MCF 10A (cell line): ENCODE measurements at regions of chr2 and their contacts with region 1.

Region 1: DNA sequence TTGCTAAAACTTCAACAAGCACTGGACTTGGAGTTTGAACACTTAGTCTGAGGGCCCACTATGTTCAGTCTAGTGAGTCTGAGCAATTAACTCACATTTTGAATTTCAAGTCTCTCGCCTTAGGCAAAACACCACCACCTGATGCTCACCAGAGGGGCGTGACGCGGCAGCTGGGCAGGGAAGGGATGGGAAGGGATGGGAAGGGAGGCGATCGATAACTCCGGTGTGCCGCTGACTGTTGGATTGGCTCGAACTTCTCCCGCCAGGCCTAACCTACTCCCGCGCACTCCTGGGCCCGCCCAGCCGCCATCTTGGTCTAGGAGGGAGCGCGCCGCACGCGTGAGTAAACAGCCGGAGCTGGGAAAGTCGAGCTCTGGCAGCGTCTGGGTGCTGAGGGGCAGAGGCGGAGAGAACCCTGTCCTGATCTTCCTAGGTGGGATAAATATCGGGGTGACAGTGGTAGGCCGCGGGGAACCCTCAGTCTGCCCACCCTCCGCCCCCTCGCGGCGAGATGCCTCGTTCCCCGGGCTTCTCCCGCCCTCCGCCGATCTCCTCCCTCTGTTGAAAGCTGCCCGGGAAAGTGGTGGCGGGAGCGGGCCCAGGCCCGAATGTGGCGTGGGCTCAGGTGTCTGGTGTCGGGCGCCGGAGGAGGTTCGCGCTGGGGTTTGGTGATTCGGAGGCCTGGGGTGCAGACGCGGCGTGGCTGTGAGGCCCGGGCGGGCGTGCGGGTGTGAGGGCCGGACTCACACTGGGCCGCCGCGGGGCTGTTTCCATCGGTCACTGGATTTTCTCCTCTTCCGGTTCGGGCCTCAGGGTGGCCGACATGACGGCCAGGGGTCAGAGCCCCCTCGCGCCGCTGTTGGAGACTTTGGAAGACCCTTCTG is at the start of gene RIF1:
- DNase-seq: peak; percentile 95
- H3K4me3 Mint-ChIP-seq: peak within 1 kb of the TSS; percentile 86
- H3K27ac Mint-ChIP-seq: peak within 1 kb of the TSS; percentile 97
- H3K4me1 Mint-ChIP-seq: no peaks in the 10 kb centered on the region
- H3K27me3 Mint-ChIP-seq: no peaks in the 10 kb centered on the region
- CTCF ChIP-seq: peak; percentile 60
- total RNA-seq, gene RIF1: 42.5 and 47.3 TPM in 2 replicates

Region 2: DNA sequence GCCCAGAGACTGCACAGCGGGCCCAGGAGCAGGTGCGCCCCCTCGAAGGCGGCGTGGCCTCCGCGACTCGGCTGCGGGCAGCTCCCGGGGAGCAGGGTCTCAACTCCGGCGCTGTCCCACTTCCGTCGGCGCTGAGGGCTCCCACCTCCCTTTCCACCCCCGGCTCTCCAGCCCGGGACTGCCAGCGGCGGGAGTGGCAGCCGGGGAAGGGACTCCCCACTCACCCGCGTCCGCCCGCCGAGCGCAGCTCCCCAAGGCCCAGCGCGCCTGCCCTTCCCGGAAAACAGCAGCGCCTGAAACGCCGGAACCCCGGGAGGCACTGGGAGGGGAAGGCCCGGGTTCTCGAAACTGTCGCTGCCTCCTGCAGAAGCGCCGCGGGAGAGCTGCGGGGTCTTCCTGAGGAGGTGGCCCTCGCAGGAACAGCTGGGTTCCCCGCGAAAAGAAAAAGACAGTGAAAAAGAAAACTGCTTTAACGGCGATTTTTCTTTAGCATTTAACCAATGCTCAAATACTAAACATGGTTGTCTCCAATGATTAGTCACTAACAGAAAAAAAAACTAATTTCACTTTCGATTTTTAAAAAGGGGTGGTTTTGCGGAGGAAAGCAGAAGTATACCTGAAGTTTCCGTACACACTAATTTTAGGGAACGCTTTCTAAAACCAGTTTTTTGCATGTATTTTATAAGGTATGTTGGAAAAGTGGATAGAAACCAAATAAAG is 120.3 kb before region 1 on chr2 and contains the start of gene NMI:
- CTCF ChIA-PET with region 1: interaction called, 3 read pairs
- POLR2A ChIA-PET with region 1: interaction called, 25 read pairs
- intact Hi-C with region 1: loop called (anchors 1 kb)
- DNase-seq: peak; percentile 74
- H3K4me3 Mint-ChIP-seq: peak within 1 kb of the TSS; percentile 84
- H3K27ac Mint-ChIP-seq: peak within 1 kb of the TSS; percentile 98
- H3K4me1 Mint-ChIP-seq: peaks cover 27% of the 10 kb centered on the region
- H3K27me3 Mint-ChIP-seq: no peaks in the 10 kb centered on the region
- CTCF ChIP-seq: no peak
- total RNA-seq, gene NMI: 10.8 and 11.7 TPM in 2 replicates

Region 3: GRCh38 chr2:151544449-151544848 is 134.6 kb after region 1 on chr2:
- CTCF ChIA-PET with region 1: no interaction called
- POLR2A ChIA-PET with region 1: no interaction called
- intact Hi-C with region 1: no loop called
- DNase-seq: no peak
- H3K4me3 Mint-ChIP-seq: no peak overlapping the region
- H3K27ac Mint-ChIP-seq: no peak overlapping the region
- H3K4me1 Mint-ChIP-seq: no peaks in the 10 kb centered on the region
- H3K27me3 Mint-ChIP-seq: no peaks in the 10 kb centered on the region
- CTCF ChIP-seq: no peak